Activated CD8-positive, alpha-beta memory T cell treated with anti-CD3 and anti-CD28 coated beads, Interleukin-2, amount 10 ng/mL, durations not matched to agents 7 days and 5 days (primary cell): ENCODE measurements at regions of chr1 and their contacts with region 1.

Region 1: GRCh38 chr1:193121616-193122593 is at the start of gene CDC73:
- DNase-seq: peak; percentile 98
- ATAC-seq: peak; percentile 97
- H3K4me3 Mint-ChIP-seq: peak within 1 kb of the TSS; percentile 96
- H3K27ac Mint-ChIP-seq: peak within 1 kb of the TSS; percentile 97
- H3K4me1 Mint-ChIP-seq: peaks cover 57% of the 10 kb centered on the region
- H3K27me3 Mint-ChIP-seq: no peaks in the 10 kb centered on the region
- total RNA-seq, gene CDC73: 55.6 to 63.3 TPM

Region 2: GRCh38 chr1:193104906-193105820 is 16.7 kb before region 1 on chr1 and contains the start of gene GLRX2:
- CTCF ChIA-PET with region 1: interaction called, 40 read pairs
- DNase-seq: peak; percentile 70
- ATAC-seq: peak; percentile 90
- H3K4me3 Mint-ChIP-seq: peak within 1 kb of the TSS; percentile 88
- H3K27ac Mint-ChIP-seq: peak within 1 kb of the TSS; percentile 71
- H3K4me1 Mint-ChIP-seq: peaks cover 19% of the 10 kb centered on the region
- H3K27me3 Mint-ChIP-seq: peaks cover 8% of the 10 kb centered on the region
- total RNA-seq, gene GLRX2: 22.3 to 37.6 TPM